ENCODE measurements at regions of chr14 and their contacts with region 1.

Region 1: DNA sequence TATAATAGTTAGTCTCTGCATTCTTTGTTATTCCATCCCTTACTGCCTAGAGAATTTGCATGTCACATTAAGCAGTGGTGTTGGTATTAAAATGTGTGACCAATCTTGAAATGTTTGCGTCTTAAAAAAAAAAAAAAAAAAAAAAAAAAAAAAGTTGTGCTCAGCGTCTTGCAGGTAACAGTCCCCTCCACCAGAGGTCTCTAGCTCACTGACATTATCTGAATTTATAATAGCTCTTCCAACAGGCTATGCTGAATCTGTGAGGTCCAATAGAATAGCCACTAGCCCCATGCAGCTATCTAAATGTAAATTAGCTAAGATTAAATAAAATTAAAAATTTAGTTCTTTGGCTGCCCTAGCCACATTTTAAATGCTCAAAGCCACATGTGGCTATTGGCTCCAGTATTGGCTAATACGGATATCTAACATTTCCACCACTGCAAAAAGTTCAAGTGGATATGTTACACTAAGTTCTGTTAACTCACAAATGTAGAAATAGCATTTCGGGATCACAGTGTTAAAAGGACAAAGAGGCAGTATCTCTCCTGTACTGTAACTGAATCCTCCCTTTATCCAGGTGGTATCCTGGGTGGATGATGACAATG is 28.7 kb downstream of the NKX2-8 start:
- DNase-seq: peak; percentile 22
- ATAC-seq: no peak
- H3K4me3 Mint-ChIP-seq: no peak overlapping the region
- H3K27ac Mint-ChIP-seq: no peak overlapping the region
- H3K4me1 Mint-ChIP-seq: no peaks in the 10 kb centered on the region
- H3K27me3 Mint-ChIP-seq: no peaks in the 10 kb centered on the region

Region 2: DNA sequence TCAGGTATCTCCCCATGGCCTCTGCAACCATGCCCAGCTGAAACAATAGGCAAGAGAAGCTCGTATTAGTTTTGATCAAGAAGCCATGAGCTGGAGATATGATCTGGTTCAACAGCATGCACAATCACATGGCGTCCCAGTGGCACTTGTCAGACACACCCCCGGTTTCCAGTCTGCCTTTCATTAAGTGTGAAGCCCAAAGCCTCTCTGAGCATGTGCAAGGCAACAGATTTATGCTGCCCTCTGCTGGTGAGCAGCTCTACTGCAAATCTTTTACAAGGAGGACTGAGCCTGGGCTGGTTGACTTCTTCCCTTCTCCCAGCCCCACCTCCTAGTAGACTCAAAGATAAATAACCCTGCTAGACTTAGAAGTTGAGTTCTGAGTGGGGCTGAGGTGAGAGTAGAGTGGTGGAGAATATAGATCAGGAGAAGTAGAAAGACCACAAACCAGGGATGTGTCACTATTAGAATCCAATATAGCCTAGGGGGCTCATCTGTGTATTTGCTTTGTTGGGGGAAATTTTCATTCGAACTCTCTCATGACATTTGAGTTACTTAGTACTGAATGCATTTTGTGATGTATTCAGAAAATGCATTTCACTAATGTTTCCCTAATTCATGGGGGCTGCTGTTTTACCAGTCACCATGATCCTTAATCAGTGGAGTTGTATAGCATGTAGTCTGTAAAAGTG is 179.6 kb before region 1 on chr14:
- CTCF ChIA-PET with region 1: no interaction called
- POLR2A ChIA-PET with region 1: no interaction called
- DNase-seq: peak; percentile 78
- ATAC-seq: peak; percentile 83
- H3K4me3 Mint-ChIP-seq: no peak overlapping the region
- H3K27ac Mint-ChIP-seq: no peak overlapping the region
- H3K4me1 Mint-ChIP-seq: no peaks in the 10 kb centered on the region
- H3K27me3 Mint-ChIP-seq: peaks cover 4% of the 10 kb centered on the region

Region 3: DNA sequence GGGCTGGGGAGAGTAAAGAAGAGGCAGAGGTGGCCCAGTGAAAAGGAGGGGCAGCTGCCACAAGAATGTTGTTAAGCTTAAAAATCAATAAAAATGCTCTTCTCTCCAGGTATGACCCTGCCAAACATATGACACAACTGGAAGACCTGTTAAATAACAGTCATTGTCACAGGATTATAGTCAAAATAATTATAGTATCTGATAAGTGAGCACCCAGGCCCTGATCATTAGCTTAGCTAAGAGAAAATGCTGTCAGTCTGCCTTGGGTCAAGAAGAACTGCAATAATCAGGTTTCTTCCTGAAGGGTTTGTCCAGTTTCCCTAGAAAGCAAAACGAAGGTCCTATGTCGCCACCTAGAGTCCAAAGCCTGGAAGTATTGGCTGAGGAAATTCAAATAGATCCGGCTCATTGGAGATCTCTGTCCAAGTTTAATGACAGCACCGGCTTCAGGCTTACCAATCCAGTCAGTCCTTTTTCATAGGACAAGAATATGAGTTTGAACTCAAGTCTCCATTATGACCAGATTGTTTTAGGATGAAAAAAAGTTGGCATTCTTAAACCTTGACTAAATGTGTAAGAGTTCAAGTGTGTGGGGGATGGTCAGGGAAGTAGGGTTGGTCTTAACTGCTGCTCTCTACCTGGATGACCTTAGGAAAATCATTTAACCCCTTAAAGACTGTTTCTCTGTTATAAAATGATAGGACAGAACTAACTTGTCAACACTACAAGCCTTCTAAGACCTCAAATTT is 51.2 kb after region 1 on chr14:
- CTCF ChIA-PET with region 1: interaction called, 28 read pairs
- POLR2A ChIA-PET with region 1: no interaction called
- DNase-seq: peak; percentile 48
- ATAC-seq: peak; percentile 49
- H3K4me3 Mint-ChIP-seq: no peak overlapping the region
- H3K27ac Mint-ChIP-seq: no peak overlapping the region
- H3K4me1 Mint-ChIP-seq: no peaks in the 10 kb centered on the region
- H3K27me3 Mint-ChIP-seq: no peaks in the 10 kb centered on the region

Measured in activated CD8-positive, alpha-beta T cell treated with anti-CD3 and anti-CD28 coated beads, Interleukin-2, amount 10 ng/mL, durations not matched to agents 7 days and 5 days (primary cell).